MCF 10A (cell line): ENCODE measurements at regions of chr1 and their contacts with region 1.

Region 1: DNA sequence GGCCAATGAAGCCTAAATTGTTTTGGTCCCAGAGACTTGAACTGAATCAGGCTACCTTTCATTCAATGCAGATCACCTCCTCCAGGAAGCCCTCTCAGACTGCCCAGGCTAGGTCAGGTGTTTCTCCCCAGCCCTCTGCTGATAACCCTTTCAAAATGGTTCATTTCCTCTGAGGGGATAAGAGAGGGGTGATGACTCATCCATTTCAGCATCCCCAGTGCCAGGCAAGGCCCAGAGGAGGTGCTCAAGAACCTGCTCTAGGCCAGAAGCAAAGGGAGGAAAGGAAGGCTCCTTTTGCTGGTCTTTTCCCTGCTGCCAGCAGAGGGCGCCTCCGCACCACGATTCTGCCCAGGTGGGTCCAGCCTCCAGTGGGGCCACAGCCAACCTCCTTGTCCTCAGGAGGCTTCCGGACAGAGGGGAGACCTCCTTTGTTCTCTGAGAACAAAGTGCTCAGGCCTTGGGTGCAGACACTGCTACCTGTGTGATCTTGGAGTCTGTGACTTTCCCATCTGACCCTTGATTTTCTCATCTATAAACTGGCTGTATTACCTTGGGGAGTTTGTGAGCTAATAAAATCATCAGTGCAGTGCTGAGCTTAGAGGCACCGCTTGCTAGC is 45.3 kb upstream of the ARHGEF10L start:
- DNase-seq: peak; percentile 83
- H3K4me3 Mint-ChIP-seq: no peak overlapping the region
- H3K27ac Mint-ChIP-seq: peak overlapping the region; percentile 57
- H3K4me1 Mint-ChIP-seq: peaks cover 17% of the 10 kb centered on the region
- H3K27me3 Mint-ChIP-seq: peaks cover 16% of the 10 kb centered on the region
- CTCF ChIP-seq: peak; percentile 96

Region 2: DNA sequence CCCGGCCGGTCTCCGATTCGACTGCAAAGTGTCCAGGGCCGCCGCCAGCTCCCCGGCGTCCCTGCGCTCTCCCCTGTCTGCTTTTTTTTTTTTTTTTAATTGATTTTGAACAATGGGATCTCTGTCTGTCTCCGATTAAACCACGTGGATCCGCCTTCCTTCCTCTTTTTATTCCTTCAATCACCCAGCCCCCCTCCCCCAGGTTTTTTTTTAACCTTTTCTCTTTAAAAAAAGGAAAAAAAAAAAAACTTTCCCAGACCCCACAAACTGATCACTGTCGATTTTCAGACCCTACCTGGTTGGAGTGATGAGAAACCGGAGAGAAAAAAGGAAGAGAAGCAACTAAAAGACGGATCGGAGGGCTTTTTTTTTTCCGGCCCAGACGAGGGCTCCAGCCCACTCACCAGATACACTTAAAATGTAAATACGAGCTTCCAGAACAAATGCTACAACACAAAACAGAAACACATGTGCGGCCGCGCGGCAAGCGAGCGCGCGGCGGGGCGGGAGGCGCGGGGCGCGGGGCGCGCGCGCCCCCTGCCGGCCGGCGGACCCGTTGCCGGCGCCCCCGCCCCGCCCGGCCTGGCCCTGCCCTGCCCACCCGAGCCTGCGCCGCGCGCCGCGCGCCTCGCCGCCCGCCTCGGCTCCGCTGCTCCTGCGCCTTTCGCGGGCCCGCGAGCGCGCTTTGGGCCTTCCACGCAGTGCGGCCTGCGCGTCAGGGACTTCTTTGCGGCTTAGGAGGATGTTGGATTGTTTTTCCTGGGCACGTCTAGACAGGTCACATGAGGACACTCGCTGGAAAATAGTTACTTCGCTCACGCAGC is 54.8 kb before region 1 on chr1 and contains the start of gene RCC2:
- CTCF ChIA-PET with region 1: interaction called, 8 read pairs
- POLR2A ChIA-PET with region 1: interaction called, 23 read pairs
- intact Hi-C with region 1: loop called (anchors 1 kb)
- DNase-seq: peak; percentile 71
- H3K4me3 Mint-ChIP-seq: peak within 1 kb of the TSS; percentile 93
- H3K27ac Mint-ChIP-seq: peak within 1 kb of the TSS; percentile 89
- H3K4me1 Mint-ChIP-seq: peaks cover 35% of the 10 kb centered on the region
- H3K27me3 Mint-ChIP-seq: no peaks in the 10 kb centered on the region
- CTCF ChIP-seq: peak; percentile 9
- total RNA-seq, gene RCC2: 89.1 and 107 TPM in 2 replicates

Region 3: GRCh38 chr1:17460245-17460644 is 34.0 kb before region 1 on chr1:
- CTCF ChIA-PET with region 1: no interaction called
- POLR2A ChIA-PET with region 1: interaction called, 10 read pairs
- intact Hi-C with region 1: no loop called
- DNase-seq: peak; percentile 95
- H3K4me3 Mint-ChIP-seq: peak overlapping the region; percentile 35
- H3K27ac Mint-ChIP-seq: peak overlapping the region; percentile 73
- H3K4me1 Mint-ChIP-seq: peaks cover 13% of the 10 kb centered on the region
- H3K27me3 Mint-ChIP-seq: no peaks in the 10 kb centered on the region
- CTCF ChIP-seq: no peak

Region 4: DNA sequence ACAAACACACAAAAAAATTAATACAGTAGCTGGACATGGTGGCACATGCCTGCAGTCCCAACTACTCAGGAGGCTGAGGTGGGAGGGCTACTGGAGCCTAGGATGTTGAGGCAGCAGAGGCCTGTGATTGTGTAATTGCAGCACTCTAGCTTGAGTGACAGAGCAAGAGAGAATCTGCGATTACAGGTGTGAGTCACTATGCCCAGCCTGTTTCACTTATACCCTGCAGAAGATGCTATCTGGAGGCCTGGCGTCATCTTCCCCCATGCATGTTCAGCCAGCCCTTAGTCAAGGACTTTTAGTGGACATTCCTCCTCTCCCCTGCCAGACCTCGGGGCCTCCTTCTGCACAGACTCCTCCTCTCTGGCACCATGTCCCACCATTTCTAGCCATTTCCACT is 18.5 kb before region 1 on chr1:
- CTCF ChIA-PET with region 1: interaction called, 16 read pairs
- POLR2A ChIA-PET with region 1: interaction called, 6 read pairs
- intact Hi-C with region 1: no loop called
- DNase-seq: peak; percentile 89
- H3K4me3 Mint-ChIP-seq: no peak overlapping the region
- H3K27ac Mint-ChIP-seq: no peak overlapping the region
- H3K4me1 Mint-ChIP-seq: peaks cover 7% of the 10 kb centered on the region
- H3K27me3 Mint-ChIP-seq: no peaks in the 10 kb centered on the region
- CTCF ChIP-seq: no peak

Region 5: DNA sequence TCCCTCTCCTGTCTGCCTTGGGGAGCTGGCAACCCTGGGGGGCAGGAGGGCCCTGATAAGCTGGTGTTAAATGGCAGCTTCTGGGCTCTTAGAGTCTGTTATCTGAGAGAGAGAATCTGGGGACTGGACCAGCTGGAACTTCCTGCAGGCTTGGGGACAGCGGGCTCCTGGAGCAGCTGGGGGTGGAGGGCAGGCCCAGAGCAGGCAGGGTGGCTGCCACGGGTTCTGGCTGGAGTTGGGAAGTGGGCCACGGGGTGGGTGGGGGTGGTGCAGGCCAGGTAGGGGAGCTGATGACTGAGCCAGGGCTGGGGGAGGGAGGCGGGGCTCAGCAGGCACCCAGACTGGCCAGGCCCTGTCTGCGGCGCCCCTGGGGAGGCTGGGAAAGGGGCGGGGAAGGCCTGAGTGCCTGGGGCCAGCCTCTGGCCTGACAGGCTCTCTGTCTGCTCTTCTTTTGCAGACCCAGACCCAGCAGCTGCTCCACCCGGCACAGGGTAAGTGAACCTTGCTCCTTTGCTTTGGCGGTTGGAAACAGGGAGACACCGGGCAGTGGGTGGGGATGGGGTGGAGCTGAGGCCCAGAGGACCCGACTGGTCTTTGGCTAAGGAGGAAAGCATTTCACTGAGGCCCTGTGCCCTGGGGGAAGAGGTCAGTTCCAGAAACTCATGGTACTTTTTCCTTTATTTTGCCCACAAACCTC is 93.9 kb after region 1 on chr1:
- CTCF ChIA-PET with region 1: interaction called, 7 read pairs
- POLR2A ChIA-PET with region 1: interaction called, 3 read pairs
- intact Hi-C with region 1: loop called (anchors 5 kb)
- DNase-seq: peak; percentile 54
- H3K4me3 Mint-ChIP-seq: peak overlapping the region; percentile 63
- H3K27ac Mint-ChIP-seq: peak overlapping the region; percentile 46
- H3K4me1 Mint-ChIP-seq: peaks cover 31% of the 10 kb centered on the region
- H3K27me3 Mint-ChIP-seq: no peaks in the 10 kb centered on the region
- CTCF ChIP-seq: no peak

Region 6: DNA sequence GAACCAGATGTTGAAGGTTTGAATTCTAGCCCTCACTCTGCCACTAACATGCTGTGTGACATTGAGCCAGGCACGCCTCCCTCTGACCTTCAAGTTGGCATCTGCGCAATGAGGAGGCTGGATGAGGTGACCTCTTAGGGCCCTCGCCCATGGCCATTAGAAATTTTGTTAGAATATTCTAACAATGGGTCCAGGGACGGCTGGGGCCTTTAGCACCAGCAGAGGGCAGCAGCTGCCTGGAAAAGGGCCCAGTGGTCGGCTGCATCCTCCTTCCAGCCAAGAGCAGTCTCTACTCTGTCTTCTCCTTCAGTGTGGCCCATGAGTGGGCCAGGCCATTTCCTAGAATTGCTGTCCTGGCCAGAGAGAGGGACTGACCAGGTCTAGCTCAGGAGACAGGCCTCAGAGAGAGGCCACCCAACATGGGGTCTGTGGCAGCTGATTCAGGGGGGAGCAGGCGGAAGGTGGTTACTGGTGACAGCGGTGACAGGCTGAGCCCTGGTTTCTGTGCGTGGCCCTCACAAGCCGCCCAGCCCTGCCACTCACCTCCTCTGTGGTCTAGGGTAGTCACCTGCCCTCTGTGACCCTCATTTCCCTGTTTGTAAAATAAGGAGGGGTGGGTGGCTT is 159.6 kb after region 1 on chr1:
- CTCF ChIA-PET with region 1: interaction called, 3 read pairs
- POLR2A ChIA-PET with region 1: no interaction called
- intact Hi-C with region 1: loop called (anchors 5 kb)
- DNase-seq: peak; percentile 56
- H3K4me3 Mint-ChIP-seq: no peak overlapping the region
- H3K27ac Mint-ChIP-seq: no peak overlapping the region
- H3K4me1 Mint-ChIP-seq: no peaks in the 10 kb centered on the region
- H3K27me3 Mint-ChIP-seq: no peaks in the 10 kb centered on the region
- CTCF ChIP-seq: peak; percentile 72